A549 (cell line): ENCODE measurements at regions of chr12 and their contacts with region 1.

Region 1: DNA sequence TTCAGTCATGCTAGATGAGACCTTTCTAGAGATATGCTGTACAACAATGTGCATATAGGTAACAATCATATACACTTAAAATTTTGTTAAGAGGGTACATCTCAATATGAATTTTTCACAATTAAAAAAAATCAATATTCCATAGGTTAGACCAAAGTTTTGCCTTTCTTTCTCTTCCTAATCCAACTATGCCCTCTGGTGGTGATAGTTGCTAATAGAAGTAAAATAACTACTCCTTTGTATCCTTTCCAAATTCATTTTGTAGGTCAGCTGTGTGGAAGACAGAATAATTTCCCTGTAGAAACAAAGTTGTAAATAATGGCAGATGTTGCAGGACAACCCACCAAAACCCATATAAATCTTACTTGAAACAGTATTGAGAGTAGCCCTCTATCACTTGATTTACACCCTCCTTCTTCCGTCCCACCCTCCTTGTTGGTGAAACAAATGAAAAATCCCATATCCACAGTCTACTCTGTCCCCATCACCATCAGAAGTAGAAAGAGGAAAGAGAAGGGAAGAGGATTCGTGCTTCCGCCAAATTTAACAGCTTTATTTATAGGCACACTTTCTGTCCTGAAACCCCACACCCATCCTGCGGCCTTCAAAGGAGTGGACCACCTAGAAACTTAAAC is 34.2 kb upstream of the KICS2 start:
- DNase-seq: peak in 1 of 2 experiments; percentile 65
- ATAC-seq: peak; percentile 30 to 84; a peak in 3 of 6 replicates
- H3K4me3 ChIP-seq: no peak overlapping the region
- H3K27ac ChIP-seq: no peak overlapping the region
- H3K4me1 ChIP-seq: no peaks in the 10 kb centered on the region
- CTCF ChIP-seq: peak; percentile 91
- EP300 ChIP-seq: no peak
- POLR2A ChIP-seq: no peak
- RAD21 ChIP-seq: peak; percentile 97 to 98

Region 2: DNA sequence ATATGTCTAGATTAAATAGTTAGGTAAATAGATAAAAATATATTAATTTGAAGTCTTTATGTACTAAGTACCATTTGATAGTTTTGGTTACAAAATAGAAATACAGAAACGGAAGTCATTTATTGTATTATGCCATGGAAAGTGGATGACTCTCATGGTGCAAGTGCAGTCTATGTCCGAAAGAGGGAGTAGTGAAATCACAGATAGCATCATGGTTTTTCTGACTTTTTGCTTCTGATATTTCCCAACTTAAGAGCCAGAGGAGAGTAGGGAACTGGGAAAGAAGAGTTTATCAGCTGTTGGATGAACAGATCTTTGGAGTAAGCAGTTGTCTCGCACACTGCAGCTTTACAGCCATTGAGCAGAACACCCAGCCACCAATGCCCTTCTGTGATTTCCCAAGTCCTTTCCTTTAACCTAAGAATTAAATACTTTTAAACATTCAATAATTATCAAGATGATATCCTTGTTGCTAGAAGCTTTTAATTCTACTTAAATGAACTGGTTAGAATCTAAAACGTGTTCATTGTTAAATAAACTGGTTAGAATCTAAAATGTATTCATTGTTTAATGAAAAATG is 430.2 kb before region 1 on chr12:
- CTCF ChIA-PET with region 1: interaction called, 26 read pairs
- POLR2A ChIA-PET with region 1: interaction called, 5 read pairs
- DNase-seq: peak; percentile 72 to 81
- ATAC-seq: peak; percentile 82 to 92
- H3K4me3 ChIP-seq: no peak overlapping the region
- H3K27ac ChIP-seq: no peak overlapping the region
- H3K4me1 ChIP-seq: 0 out of 3 replicates have a peak, but pooled peaks cover 4% of the 10 kb centered on the region
- CTCF ChIP-seq: peak; percentile 95
- EP300 ChIP-seq: no peak
- POLR2A ChIP-seq: no peak
- RAD21 ChIP-seq: peak; percentile 92 to 97

Region 3: DNA sequence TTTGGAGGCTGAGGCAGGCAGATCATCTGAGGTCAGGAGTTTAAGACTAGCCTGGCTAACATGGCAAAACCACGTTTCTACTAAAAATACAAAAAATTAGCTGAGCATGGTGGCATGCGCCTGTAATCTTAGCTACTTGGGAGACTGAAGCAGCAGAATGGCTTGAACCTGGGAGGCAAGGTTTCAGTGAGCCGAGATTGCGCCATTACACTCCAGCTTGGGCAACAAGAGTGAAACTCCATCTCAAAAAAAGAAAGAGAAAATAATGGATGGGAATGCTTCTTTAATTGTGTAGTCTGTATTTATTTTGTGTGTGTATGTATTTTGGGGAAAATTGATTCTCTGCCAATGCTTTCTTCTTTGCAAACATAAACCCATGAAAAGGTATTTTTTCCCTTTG is 379.3 kb before region 1 on chr12:
- CTCF ChIA-PET with region 1: interaction called, 10 read pairs
- POLR2A ChIA-PET with region 1: no interaction called
- DNase-seq: peak in 1 of 2 experiments; percentile 26
- ATAC-seq: no peak
- H3K4me3 ChIP-seq: no peak overlapping the region
- H3K27ac ChIP-seq: peak overlapping the region; percentile 35 to 56; a peak in 3 of 6 replicates
- H3K4me1 ChIP-seq: peaks cover 41% of the 10 kb centered on the region
- CTCF ChIP-seq: no peak
- EP300 ChIP-seq: no peak
- POLR2A ChIP-seq: no peak
- RAD21 ChIP-seq: no peak

Region 4: GRCh38 chr12:64236549-64236948 is 19.7 kb before region 1 on chr12:
- CTCF ChIA-PET with region 1: interaction called, 33 read pairs
- POLR2A ChIA-PET with region 1: no interaction called
- DNase-seq: peak in 1 of 2 experiments; percentile 29
- ATAC-seq: peak; percentile 68 to 78; a peak in 5 of 6 replicates
- H3K4me3 ChIP-seq: no peak overlapping the region
- H3K27ac ChIP-seq: no peak overlapping the region
- H3K4me1 ChIP-seq: no peaks in the 10 kb centered on the region
- CTCF ChIP-seq: no peak
- EP300 ChIP-seq: no peak
- POLR2A ChIP-seq: no peak
- RAD21 ChIP-seq: peak; percentile 49 to 62; a peak in 4 of 5 replicates

Region 5: GRCh38 chr12:64273527-64274403 is 17.5 kb after region 1 on chr12:
- CTCF ChIA-PET with region 1: interaction called, 21 read pairs
- POLR2A ChIA-PET with region 1: no interaction called
- DNase-seq: peak; percentile 27 to 51
- ATAC-seq: peak; percentile 80 to 95
- H3K4me3 ChIP-seq: no peak overlapping the region
- H3K27ac ChIP-seq: no peak overlapping the region
- H3K4me1 ChIP-seq: no peaks in the 10 kb centered on the region
- CTCF ChIP-seq: no peak; the same call in 2 of the 3 replicates
- EP300 ChIP-seq: no peak
- POLR2A ChIP-seq: no peak
- RAD21 ChIP-seq: peak in 1 of 2 experiments; percentile 63; a peak in 3 of 5 replicates